ENCODE measurements at regions of chr6 and their contacts with region 1.

Region 1: DNA sequence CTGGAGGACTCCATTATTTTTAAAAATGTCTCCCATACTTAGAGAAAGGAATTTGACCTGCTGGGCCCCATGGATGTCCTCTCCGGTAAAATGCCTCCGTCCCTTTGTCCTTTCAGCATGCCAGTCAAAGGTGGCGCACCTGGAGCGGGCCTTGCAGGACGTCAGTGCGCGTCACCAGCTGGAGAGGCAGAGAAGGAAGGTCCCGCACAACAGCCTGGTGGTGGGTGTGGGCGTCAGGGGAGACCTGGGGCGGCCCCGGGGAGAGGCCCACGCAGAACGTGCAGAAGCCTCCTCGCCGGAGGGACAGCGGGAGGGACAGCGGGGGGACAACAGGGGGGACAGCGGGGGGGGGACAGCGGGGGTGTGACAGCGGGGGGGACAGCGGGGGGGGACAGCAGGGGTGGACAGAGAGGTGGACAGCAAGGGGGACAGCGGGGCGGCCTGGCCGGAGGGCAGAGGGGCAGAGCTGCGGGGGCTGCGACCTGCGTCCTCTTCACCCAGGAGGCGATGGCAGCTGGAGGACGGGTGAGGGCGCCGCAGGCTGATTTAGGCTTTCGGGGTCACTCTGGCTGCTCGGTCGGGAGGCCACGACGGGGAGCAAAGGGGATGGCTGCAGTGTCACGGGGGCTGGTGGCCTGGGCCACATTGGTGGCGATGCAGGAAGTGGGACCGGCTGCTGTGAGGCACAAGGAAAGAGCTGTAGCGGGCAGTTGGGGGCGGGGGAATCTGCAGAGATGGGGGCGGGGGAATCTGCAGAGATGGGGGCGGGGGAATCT is 859 bp upstream of the KIF25 start:
- DNase-seq: no peak

Region 2: GRCh38 chr6:168032005-168032760 is 35.6 kb after region 1 on chr6:
- intact Hi-C with region 1: loop called (anchors 5 kb)
- DNase-seq: peak; percentile 67